CD4-positive, alpha-beta T cell (primary cell): ENCODE measurements at regions of chr7 and their contacts with region 1.

Region 1: GRCh38 chr7:143372070-143372469 is 9.1 kb upstream of the ZYX start:
- DNase-seq: peak; percentile 33 to 82 (median 62)
- ATAC-seq: peak; percentile 45
- H3K4me3 ChIP-seq: no peak overlapping the region
- H3K4me3 Mint-ChIP-seq: peak overlapping the region; percentile 2
- H3K27ac ChIP-seq: no peak overlapping the region
- H3K27ac Mint-ChIP-seq: peak overlapping the region; percentile 24
- H3K4me1 ChIP-seq: peaks cover 52% of the 10 kb centered on the region
- H3K4me1 Mint-ChIP-seq: peaks cover 57% of the 10 kb centered on the region
- H3K27me3 ChIP-seq: no peaks in the 10 kb centered on the region
- H3K27me3 Mint-ChIP-seq: no peaks in the 10 kb centered on the region
- CTCF ChIP-seq: no peak

Region 2: GRCh38 chr7:143305423-143306070 is 66.5 kb before region 1 on chr7:
- CTCF ChIA-PET with region 1: no interaction called
- POLR2A ChIA-PET with region 1: interaction called, 8 read pairs
- intact Hi-C with region 1: loop called in 1 of 2 experiments (anchors 5 kb)
- DNase-seq: peak; percentile 53 to 81 (median 65)
- ATAC-seq: peak; percentile 74
- H3K4me3 ChIP-seq: no peak overlapping the region
- H3K4me3 Mint-ChIP-seq: no peak overlapping the region
- H3K27ac ChIP-seq: no peak overlapping the region
- H3K27ac Mint-ChIP-seq: peak overlapping the region; percentile 5
- H3K4me1 ChIP-seq: peaks cover 17% of the 10 kb centered on the region
- H3K4me1 Mint-ChIP-seq: peaks cover 25% of the 10 kb centered on the region
- H3K27me3 ChIP-seq: no peaks in the 10 kb centered on the region
- H3K27me3 Mint-ChIP-seq: no peaks in the 10 kb centered on the region
- CTCF ChIP-seq: peak; percentile 64

Region 3: DNA sequence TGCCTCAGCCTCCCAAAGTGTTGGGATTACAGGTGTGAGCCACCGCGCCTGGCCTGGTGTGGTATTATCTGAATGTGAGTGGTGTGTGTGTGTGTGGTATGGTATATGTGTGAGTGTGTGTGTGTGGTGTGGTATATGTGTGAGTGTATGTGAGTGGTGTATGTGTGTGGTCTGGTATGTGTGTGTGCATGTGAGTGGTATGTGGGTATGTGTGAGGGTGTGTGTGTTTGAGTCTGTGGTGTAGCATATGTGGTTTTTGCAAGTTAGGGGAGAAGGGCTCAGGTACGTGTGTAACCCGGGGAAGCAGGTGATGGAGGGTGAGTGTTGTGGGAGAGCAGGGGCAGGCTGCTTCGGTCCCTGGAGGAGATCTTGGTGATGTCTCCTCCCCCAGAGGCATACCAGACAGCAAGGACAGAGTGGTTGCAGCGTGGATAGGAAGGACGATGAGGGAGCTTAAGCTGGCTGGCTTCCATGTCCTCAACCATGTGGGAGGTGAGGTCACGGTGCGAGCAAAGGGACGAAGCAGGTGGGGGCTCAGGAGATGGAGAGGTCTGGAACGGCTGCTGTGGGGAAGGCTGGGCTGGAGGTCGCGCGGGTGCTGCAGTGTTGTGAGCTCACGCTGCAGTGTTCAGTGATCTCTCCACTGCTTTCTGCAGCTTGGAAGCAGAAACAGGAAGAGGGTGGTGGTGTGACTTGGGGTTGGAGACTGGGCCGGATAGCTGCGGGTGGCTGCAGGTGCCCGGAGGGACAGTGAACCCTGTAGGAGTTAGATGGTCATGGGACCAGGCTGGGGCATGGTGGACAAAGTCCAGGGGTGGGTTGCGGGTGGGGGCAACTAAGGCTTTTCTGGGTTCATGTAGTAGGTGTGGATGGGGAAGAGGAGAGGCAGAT is 14.1 kb after region 1 on chr7:
- CTCF ChIA-PET with region 1: no interaction called
- POLR2A ChIA-PET with region 1: interaction called, 19 read pairs
- intact Hi-C with region 1: no loop called
- DNase-seq: peak in 7 of 14 experiments; percentile 34 to 77 (median 60)
- ATAC-seq: peak; percentile 67
- H3K4me3 ChIP-seq: peak overlapping the region; percentile 40
- H3K4me3 Mint-ChIP-seq: no peak overlapping the region
- H3K27ac ChIP-seq: peak overlapping the region; percentile 47 to 68
- H3K27ac Mint-ChIP-seq: no peak overlapping the region
- H3K4me1 ChIP-seq: peaks cover 70% of the 10 kb centered on the region
- H3K4me1 Mint-ChIP-seq: peaks cover 10% of the 10 kb centered on the region
- H3K27me3 ChIP-seq: no peaks in the 10 kb centered on the region
- H3K27me3 Mint-ChIP-seq: no peaks in the 10 kb centered on the region
- CTCF ChIP-seq: no peak

Region 4: DNA sequence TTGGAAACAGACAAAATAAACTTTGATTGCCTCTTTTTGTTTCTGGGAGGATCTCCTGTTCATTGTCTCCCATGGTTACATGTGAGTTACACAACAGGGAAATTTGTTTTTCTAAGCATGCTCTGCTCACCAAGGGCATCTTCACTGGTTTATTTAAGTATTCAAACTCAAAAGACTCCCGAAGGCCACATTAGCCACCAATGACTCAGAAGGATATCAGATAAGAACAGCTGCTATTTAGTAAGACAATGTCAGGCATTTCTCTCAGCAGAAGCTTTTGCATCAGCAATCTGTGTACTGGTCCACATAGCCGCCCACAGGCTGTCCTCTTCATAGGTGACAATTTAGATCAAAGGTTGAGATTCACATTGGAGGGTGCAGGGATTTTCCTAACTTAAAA is 647.4 kb after region 1 on chr7:
- CTCF ChIA-PET with region 1: no interaction called
- POLR2A ChIA-PET with region 1: no interaction called
- intact Hi-C with region 1: no loop called
- DNase-seq: no peak
- ATAC-seq: no peak
- H3K4me3 ChIP-seq: no peak overlapping the region
- H3K4me3 Mint-ChIP-seq: no peak overlapping the region
- H3K27ac ChIP-seq: no peak overlapping the region
- H3K27ac Mint-ChIP-seq: no peak overlapping the region
- H3K4me1 ChIP-seq: no peaks in the 10 kb centered on the region
- H3K4me1 Mint-ChIP-seq: no peaks in the 10 kb centered on the region
- H3K27me3 ChIP-seq: no peaks in the 10 kb centered on the region
- H3K27me3 Mint-ChIP-seq: no peaks in the 10 kb centered on the region
- CTCF ChIP-seq: no peak